ENCODE measurements at regions of chr3 and their contacts with region 1.

Region 1: GRCh38 chr3:160707187-160707794 is 30.3 kb downstream of the ARL14 start:
- DNase-seq: peak in 1 of 2 donors; percentile 87
- H3K4me3 ChIP-seq: no peak overlapping the region
- H3K27ac ChIP-seq: no peak overlapping the region
- H3K4me1 ChIP-seq: peaks cover 0 to 6% (median 0%) of the 10 kb centered on the region in 4 donors
- H3K27me3 ChIP-seq: no peaks in the 10 kb centered on the region
- CTCF ChIP-seq: peak in 5 of 7 experiments; percentile 37 to 56 (median 43)
- EP300 ChIP-seq: no peak
- POLR2A ChIP-seq: no peak

Region 2: GRCh38 chr3:160941885-160942494 is 234.7 kb after region 1 on chr3:
- intact Hi-C with region 1: loop called (anchors 5 kb)
- DNase-seq: peak; percentile 78 to 90
- H3K4me3 ChIP-seq: no peak overlapping the region
- H3K27ac ChIP-seq: no peak overlapping the region
- H3K4me1 ChIP-seq: peaks cover 0 to 12% (median 3%) of the 10 kb centered on the region in 4 donors
- H3K27me3 ChIP-seq: no peaks in the 10 kb centered on the region
- CTCF ChIP-seq: peak in 5 of 7 experiments; percentile 77 to 91 (median 79)
- EP300 ChIP-seq: no peak
- POLR2A ChIP-seq: no peak